ENCODE measurements at regions of chr12 and their contacts with region 1.

Region 1: DNA sequence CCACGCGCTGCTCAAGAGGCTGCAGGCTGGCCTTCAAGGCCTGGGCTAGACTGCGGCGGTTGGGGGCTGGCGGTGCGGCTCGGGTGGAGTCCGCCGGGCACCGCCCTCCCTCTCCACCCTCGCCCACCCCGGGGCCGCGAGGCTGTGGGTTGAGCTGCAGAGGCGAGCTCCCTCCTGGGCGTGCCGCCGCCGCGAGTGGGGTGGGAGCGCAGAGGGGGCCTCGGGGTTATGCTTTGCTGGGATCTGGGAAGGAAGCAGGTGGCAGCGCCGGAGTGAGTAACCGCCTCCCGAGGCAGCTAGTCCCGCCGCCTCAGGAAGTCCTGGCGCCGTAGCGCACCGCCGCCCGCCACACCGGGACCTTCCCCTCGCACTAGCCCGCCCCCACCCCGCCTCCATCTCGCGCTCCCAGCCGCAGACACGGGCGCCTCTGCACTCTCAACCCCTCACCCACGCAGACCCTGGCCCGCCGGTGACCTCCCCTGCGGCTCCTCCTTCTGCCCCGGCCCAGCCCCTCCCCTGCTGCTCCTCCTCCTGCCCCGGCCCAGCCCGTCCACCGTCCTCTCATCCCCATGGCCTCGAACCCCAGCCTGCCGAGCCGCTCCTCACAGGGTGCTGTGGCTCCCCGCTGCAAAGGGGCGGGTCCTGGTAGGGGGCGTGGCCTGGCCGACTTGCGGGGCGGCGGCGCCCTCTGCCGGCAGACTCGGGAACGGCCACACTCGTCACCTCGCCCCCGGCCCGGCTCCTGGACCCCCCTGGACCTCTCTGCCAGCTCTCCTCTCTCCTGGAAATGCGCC is 16.6 kb downstream of the TAMALIN start:
- DNase-seq: peak; percentile 93
- H3K4me3 ChIP-seq: peak overlapping the region; percentile 34 to 54 (median 46)
- H3K27ac ChIP-seq: peak overlapping the region; percentile 93 to 95 (median 94)
- H3K4me1 ChIP-seq: peaks cover 17 to 39% (median 35%) of the 10 kb centered on the region in 4 donors
- H3K27me3 ChIP-seq: no peaks in the 10 kb centered on the region
- CTCF ChIP-seq: peak; percentile 97 to 99 (median 98)
- EP300 ChIP-seq: no peak
- POLR2A ChIP-seq: no peak

Region 2: GRCh38 chr12:51482929-51483697 is 540.3 kb before region 1 on chr12:
- in situ Hi-C with region 1: no loop called
- intact Hi-C with region 1: no loop called
- DNase-seq: no peak
- H3K4me3 ChIP-seq: no peak overlapping the region
- H3K27ac ChIP-seq: no peak overlapping the region
- H3K4me1 ChIP-seq: no peaks in the 10 kb centered on the region
- H3K27me3 ChIP-seq: no peaks in the 10 kb centered on the region
- CTCF ChIP-seq: no peak
- EP300 ChIP-seq: no peak
- POLR2A ChIP-seq: no peak

Region 3: DNA sequence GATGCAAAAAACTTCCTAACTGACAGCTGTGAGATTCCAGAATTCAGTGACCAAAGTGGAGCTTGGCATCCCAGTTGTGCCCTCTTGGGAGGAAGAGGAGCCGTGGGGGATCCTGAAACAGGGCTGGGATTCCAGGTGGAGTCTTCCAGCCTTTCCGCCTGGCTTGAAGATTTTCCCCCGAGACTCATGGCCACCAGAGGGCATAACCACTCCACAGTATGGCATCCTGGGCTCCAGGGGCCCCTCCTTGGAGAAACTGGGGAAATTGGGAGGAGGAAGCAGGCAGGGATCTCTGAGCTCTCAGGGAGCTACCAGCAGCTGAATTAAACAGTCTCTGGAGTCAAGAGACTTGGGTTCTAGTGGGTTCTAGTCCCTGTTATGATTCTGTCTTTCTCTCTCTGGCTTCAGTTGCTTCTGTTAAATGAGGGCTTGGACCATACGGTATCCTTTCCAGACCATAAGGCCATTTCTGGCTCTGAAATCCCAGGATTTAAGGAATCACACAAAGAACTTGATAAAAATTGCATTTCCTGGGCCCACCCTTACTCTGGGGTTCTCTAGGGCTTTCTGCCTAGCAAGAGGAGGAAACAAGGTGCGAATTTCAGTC is 19.2 kb before region 1 on chr12:
- in situ Hi-C with region 1: no loop called
- intact Hi-C with region 1: loop called (anchors 2 kb)
- DNase-seq: peak; percentile 55
- H3K4me3 ChIP-seq: no peak overlapping the region
- H3K27ac ChIP-seq: no peak overlapping the region
- H3K4me1 ChIP-seq: peaks cover 0 to 21% (median 15%) of the 10 kb centered on the region in 4 donors
- H3K27me3 ChIP-seq: peaks cover 30% of the 10 kb centered on the region
- CTCF ChIP-seq: peak; percentile 49 to 76 (median 59)
- EP300 ChIP-seq: no peak
- POLR2A ChIP-seq: no peak

Region 4: DNA sequence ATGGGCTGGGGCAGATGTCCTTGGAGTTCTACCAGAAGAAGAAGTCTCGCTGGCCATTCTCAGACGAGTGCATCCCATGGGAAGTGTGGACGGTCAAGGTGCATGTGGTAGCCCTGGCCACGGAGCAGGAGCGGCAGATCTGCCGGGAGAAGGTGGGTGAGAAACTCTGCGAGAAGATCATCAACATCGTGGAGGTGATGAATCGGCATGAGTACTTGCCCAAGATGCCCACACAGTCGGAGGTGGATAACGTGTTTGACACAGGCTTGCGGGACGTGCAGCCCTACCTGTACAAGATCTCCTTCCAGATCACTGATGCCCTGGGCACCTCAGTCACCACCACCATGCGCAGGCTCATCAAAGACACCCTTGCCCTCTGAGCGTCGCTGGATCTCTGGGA is 53.4 kb after region 1 on chr12:
- in situ Hi-C with region 1: loop called in 3 of 4 experiments (anchors 5 to 10 kb)
- intact Hi-C with region 1: loop called (anchors 2 kb)
- DNase-seq: no peak
- H3K4me3 ChIP-seq: no peak overlapping the region
- H3K27ac ChIP-seq: no peak overlapping the region
- H3K4me1 ChIP-seq: peaks cover 1 to 17% (median 12%) of the 10 kb centered on the region in 4 donors
- H3K27me3 ChIP-seq: no peaks in the 10 kb centered on the region
- CTCF ChIP-seq: no peak
- EP300 ChIP-seq: no peak
- POLR2A ChIP-seq: no peak

Region 5: DNA sequence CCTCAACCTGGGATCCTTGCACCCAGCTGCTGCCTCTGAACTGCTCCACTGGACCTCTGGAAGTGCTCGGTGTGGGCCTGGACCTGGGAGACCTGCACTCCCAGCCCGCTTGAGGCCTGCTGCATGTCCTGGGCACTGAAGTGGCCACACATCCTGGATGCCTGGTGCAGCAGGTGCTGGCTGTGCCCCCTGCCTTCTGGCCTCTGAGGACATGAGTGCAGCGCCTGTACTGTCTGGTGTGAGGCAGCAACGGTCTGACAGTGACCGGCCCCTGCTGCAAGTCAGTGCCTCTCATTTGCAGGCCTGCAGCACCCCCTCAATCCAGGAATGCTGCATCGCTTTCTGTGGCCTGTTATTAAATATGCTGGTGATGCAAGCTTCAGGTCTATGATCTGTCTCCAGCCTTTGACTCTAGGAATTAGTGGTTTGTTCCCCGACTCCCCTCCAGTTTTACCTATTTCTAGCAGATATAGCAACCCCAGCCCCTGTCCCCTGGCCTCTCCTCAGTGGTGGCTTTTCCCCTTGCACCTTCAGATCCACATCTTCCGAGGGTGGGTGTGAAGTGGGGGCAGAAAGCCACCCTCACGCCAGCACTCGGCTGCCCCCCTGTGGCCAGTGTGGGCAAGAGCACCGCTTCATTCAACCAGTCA is 59.7 kb after region 1 on chr12:
- in situ Hi-C with region 1: loop called in 3 of 4 experiments (anchors 5 to 10 kb)
- intact Hi-C with region 1: loop called (anchors 2 kb)
- DNase-seq: peak; percentile 68
- H3K4me3 ChIP-seq: no peak overlapping the region
- H3K27ac ChIP-seq: peak overlapping the region; percentile 60 to 77 (median 66)
- H3K4me1 ChIP-seq: peaks cover 11 to 27% (median 14%) of the 10 kb centered on the region in 4 donors
- H3K27me3 ChIP-seq: no peaks in the 10 kb centered on the region
- CTCF ChIP-seq: peak; percentile 94 to 98 (median 95)
- EP300 ChIP-seq: no peak
- POLR2A ChIP-seq: no peak

Measured in transverse colon (tissue), 4 donors.